Heart left ventricle (tissue), 16 donors: ENCODE measurements at regions of chr3 and their contacts with region 1.

Region 1: DNA sequence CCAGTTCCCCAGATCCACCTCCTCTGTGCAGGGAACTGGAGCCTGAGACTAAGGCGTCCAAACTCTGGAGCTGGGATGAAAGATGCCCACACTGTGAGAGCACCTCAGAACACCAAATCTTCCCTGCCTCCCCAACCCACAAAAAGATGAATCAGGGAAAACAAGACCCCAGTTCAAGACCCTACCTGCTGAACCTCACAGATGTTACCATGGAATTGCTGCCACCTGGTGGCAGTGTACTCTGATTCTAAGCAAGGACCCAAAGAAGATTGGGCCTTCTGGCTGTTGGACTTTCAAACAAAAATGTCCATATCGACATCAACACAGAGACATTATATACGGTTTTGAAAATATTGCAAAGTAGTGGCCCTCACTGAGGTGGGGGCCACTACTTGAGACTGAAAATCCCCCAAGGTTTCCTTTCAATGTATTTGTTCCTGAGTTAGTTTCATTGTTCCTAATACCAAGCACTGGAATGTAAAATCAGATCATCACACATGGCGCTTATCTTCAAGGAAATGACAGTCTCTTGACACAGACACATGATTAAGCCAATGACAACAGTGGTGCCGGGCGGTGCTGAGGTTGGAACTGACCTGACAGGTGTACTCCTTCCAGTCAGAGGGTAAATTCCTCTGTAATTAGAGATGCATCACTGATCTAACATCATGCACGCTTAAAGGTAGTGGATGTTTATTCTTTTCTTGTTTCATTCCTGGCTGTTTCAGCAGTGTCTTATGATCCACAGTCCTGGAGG is 67.6 kb downstream of the SLC6A11 start:
- DNase-seq: no peak
- ATAC-seq: no peak
- H3K4me3 ChIP-seq: no peak overlapping the region
- H3K27ac ChIP-seq: no peak overlapping the region
- H3K4me1 ChIP-seq: no peaks in the 10 kb centered on the region
- H3K27me3 ChIP-seq: peaks cover 0 to 38% (median 3%) of the 10 kb centered on the region in 9 donors
- CTCF ChIP-seq: peak; percentile 10 to 42 (median 27)
- POLR2A ChIP-seq: no peak

Region 2: DNA sequence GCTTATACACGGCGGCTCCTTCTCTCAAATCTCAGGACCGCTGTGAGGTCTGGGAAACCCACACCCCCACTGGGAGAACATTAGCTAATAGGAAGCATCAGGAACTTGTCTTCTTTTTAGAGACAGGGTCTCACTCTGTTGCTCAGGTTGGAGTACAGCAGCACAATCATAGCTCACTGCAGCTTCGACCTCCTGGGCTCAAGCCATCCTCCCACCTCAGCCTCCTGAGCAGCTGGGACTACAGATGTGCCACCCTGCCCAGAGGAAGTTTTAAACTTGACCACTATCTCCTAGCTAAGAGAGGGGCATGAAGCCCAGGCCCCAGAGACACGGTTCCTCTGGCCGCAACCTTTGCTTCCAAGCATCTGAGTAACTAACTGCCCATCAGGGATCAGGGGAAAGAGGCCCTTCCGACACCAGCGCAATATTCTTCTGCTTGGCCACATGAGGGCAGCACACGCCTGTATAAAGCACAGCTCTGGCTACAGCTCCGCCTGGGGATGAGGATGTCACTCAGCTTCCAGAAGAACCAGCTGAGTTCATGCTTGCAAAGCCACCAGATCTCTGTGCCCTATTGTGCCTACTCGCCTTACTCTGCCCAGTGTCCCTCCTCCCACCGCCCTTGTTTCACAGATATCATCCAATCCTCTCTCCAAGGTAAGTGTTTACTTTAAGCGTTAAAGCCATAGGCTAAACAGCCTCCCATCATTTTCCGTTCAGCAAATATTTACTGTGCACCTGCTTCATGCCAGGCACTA is 125.2 kb before region 1 on chr3:
- intact Hi-C with region 1: loop called in 7 of 10 experiments (anchors 2 to 10 kb)
- DNase-seq: peak in 4 of 5 donors; percentile 36 to 45 (median 41)
- ATAC-seq: peak; percentile 69 to 88 (median 84)
- H3K4me3 ChIP-seq: no peak overlapping the region
- H3K27ac ChIP-seq: no peak overlapping the region
- H3K4me1 ChIP-seq: no peaks in the 10 kb centered on the region
- H3K27me3 ChIP-seq: peaks cover 0 to 43% (median 11%) of the 10 kb centered on the region in 9 donors
- CTCF ChIP-seq: peak; percentile 49 to 74 (median 64)
- POLR2A ChIP-seq: no peak

Region 3: GRCh38 chr3:10764259-10765051 is 119.2 kb before region 1 on chr3:
- intact Hi-C with region 1: loop called in 7 of 10 experiments (anchors 2 to 10 kb)
- DNase-seq: no peak
- ATAC-seq: no peak
- H3K4me3 ChIP-seq: no peak overlapping the region
- H3K27ac ChIP-seq: no peak overlapping the region
- H3K4me1 ChIP-seq: no peaks in the 10 kb centered on the region
- H3K27me3 ChIP-seq: peaks cover 0 to 83% (median 17%) of the 10 kb centered on the region in 9 donors
- CTCF ChIP-seq: no peak
- POLR2A ChIP-seq: no peak

Region 4: GRCh38 chr3:10772271-10773161 is 111.1 kb before region 1 on chr3:
- intact Hi-C with region 1: loop called in 2 of 10 experiments (anchors 5 to 10 kb)
- DNase-seq: no peak
- ATAC-seq: peak in 1 of 4 donors; percentile 43
- H3K4me3 ChIP-seq: no peak overlapping the region
- H3K27ac ChIP-seq: no peak overlapping the region
- H3K4me1 ChIP-seq: no peaks in the 10 kb centered on the region
- H3K27me3 ChIP-seq: peaks cover 0 to 62% (median 5%) of the 10 kb centered on the region in 9 donors
- CTCF ChIP-seq: peak in 2 of 12 donors; percentile 7 to 9
- POLR2A ChIP-seq: no peak

Region 5: DNA sequence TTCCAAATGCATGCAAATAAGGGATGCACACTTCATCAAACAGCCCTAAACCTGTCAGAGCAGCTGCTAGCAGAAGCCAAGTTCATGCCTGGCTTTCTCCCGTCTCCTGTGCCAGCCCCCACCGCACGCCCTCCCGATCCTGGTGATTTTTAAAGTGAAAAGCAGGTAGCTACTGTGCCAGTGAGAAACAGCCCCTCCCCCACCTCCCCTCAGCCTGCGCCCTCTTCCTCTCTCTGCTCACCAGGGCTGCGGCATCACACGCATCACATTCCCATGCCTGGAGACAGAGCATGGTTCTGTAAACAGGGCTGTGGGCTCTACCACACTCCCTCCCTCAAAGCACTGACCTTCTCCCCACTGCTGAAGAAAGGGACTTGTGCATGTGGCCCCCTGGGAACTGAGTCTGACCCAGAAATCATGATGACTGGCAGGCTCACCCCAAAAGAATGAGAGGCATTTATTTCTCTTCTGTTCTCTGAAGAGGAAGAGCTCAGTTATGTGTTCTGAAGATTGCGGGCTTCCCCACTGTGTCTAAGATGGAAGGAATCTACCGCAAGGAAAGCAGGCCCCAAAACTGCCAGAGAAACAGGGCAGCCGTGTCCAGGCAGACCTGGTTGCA is 94.3 kb after region 1 on chr3:
- intact Hi-C with region 1: no loop called
- DNase-seq: peak in 1 of 5 donors; percentile 6
- ATAC-seq: no peak
- H3K4me3 ChIP-seq: no peak overlapping the region
- H3K27ac ChIP-seq: no peak overlapping the region
- H3K4me1 ChIP-seq: peaks cover 0 to 22% (median 12%) of the 10 kb centered on the region in 12 donors
- H3K27me3 ChIP-seq: peaks cover 0 to 12% (median 0%) of the 10 kb centered on the region in 9 donors
- CTCF ChIP-seq: no peak
- POLR2A ChIP-seq: no peak